Dendritic cell treated with granulocyte-macrophage colony-stimulating factor and Interleukin-4, amounts not matched to agents 40 ng/mL and 50 ng/mL, for 4 days (primary cell): ENCODE measurements at regions of chr2 and their contacts with region 1.

Region 1: GRCh38 chr2:118865106-118865505 is 17.7 kb upstream of the EN1 start:
- H3K4me3 Mint-ChIP-seq: no peak overlapping the region
- H3K27ac Mint-ChIP-seq: no peak overlapping the region
- H3K4me1 Mint-ChIP-seq: no peaks in the 10 kb centered on the region
- H3K27me3 Mint-ChIP-seq: peaks cover 67% of the 10 kb centered on the region

Region 2: DNA sequence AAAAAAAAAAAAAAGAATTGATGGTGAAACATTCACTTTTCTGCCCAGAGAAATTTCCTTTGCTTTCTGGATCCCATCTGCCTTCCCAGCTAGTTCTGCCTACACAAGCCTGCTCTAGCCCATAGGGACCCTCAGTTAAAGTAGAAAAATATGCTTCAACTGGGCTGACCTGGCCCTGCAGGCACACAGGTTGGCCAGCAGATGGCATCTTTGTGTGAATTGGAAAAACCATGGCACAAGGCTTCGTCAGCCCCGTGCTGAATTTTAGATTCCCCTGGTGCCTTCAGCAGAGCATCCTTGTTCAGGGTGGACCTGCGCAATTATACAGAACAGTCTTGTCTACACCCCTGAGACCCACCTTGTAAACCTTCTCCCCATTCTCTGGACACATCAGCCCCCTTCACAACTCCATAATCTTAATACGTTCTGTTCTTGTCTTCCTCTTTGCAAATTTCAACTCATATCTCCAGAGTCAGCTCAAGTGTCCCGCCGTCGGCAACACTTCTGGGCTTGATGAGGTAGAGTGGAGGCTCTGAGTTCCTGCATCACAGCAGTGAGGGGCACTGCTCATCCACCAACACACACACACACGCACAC is 662.3 kb before region 1 on chr2:
- intact Hi-C with region 1: loop called (anchors 1 kb)
- H3K4me3 Mint-ChIP-seq: no peak overlapping the region
- H3K27ac Mint-ChIP-seq: no peak overlapping the region
- H3K4me1 Mint-ChIP-seq: no peaks in the 10 kb centered on the region
- H3K27me3 Mint-ChIP-seq: peaks cover 39% of the 10 kb centered on the region

Region 3: GRCh38 chr2:118221666-118222594 is 643.2 kb before region 1 on chr2:
- intact Hi-C with region 1: loop called (anchors 2 kb)
- H3K4me3 Mint-ChIP-seq: no peak overlapping the region
- H3K27ac Mint-ChIP-seq: no peak overlapping the region
- H3K4me1 Mint-ChIP-seq: peaks cover 15% of the 10 kb centered on the region
- H3K27me3 Mint-ChIP-seq: peaks cover 71% of the 10 kb centered on the region

Region 4: DNA sequence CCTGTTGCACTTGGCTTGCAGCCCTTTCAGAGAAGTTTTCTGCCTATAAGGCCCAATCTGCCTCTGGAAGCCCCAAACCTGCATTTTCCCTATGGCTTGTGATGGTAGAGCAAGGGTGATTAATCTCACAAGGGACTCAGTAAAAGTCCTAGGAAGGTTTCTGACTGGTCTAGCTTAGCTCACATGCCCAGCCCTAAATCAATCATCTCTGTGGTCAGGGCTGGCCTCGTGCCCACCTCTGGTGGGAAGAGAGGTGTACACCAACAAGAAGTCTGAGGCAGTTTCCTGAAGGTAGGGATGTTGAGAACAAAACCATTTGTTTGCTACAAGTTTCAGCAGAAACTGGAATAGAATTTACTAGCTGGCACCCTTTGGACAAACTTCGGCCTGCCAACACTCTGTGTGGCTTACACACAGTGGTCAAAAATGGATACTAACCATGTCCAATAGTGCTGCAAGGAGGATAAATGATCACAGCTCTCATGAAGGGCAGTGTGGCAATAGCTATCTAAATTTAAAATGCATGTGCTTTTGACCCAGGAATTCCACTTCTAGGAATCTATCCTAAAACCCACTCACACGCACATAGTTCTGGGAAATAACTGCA is 114.0 kb before region 1 on chr2:
- intact Hi-C with region 1: no loop called
- H3K4me3 Mint-ChIP-seq: no peak overlapping the region
- H3K27ac Mint-ChIP-seq: no peak overlapping the region
- H3K4me1 Mint-ChIP-seq: no peaks in the 10 kb centered on the region
- H3K27me3 Mint-ChIP-seq: no peaks in the 10 kb centered on the region